Naive thymus-derived CD4-positive, alpha-beta T cell (primary cell): ENCODE measurements at regions of chr1 and their contacts with region 1.

Region 1: DNA sequence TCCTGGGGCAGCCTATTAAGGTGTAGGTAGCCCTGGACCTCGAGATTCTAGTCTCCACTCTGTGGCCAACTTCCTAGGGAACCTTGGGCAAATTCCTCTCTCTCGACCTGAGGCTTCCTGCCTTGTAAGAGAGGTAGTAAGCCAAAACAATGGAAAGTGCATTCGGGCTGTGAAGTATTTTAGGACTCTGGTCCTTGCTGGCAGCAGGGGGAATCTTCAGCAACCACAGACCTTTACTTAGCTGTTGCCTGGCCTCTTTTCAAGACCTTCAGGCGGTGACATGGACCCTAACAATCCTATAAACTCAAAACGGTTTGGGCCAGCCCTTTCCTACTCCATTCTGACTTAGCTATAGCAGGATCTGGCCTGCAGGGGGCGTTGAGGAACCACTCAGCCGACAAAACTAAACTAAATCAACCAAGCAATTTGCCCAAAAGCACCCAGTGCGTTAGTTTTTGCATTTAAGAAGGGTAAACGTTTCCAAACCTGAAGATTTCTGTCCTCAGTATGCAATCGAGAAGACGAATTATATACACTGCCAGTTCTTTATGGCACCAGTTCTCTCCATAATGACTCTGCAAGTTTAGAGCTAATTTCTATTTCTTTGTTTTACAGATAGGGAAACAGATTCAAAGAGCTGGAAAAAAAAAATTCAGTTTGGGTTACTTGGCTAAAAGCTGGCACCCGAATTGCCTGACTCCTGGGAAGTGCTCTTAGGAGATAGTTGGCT is 10.9 kb upstream of the SESN2 start:
- DNase-seq: peak; percentile 67 to 86 (median 80)
- ATAC-seq: peak; percentile 36
- H3K4me3 ChIP-seq: peak overlapping the region; percentile 75
- H3K4me3 Mint-ChIP-seq: peak overlapping the region; percentile 80 to 99 (median 90)
- H3K27ac ChIP-seq: peak overlapping the region; percentile 95
- H3K27ac Mint-ChIP-seq: peak overlapping the region; percentile 90 to 100 (median 94)
- H3K4me1 ChIP-seq: peaks cover 46 to 52% of the 10 kb centered on the region in 2 donors
- H3K4me1 Mint-ChIP-seq: peaks cover 38 to 52% (median 49%) of the 10 kb centered on the region in 7 donors
- H3K27me3 ChIP-seq: no peaks in the 10 kb centered on the region
- H3K27me3 Mint-ChIP-seq: no peaks in the 10 kb centered on the region

Region 2: DNA sequence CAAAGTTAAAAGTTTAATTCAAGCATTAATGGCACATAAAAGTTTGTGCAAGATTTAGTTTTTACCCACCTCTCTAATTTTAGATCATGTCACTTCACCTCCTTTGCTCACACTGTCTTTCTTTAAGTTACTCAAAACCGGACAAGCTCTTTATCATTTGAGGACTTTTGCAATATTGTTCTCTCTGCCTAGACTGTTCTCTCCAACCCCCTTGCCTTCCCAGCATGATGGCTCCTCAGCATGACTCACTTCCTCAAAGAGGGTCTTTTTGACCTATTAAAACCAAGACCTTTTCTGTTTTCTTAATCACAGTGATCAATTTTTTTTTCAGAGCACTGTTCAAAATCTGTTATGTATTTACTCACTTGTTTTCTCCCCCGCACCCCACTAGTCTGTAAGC is 227.4 kb before region 1 on chr1:
- CTCF ChIA-PET with region 1: no interaction called
- POLR2A ChIA-PET with region 1: no interaction called
- intact Hi-C with region 1: no loop called
- DNase-seq: no peak
- ATAC-seq: no peak
- H3K4me3 ChIP-seq: no peak overlapping the region
- H3K4me3 Mint-ChIP-seq: no peak overlapping the region
- H3K27ac ChIP-seq: no peak overlapping the region
- H3K27ac Mint-ChIP-seq: peak overlapping the region in 4 of 9 donors; percentile 2 to 76 (median 30)
- H3K4me1 ChIP-seq: no peaks in the 10 kb centered on the region
- H3K4me1 Mint-ChIP-seq: peaks cover 0 to 14% (median 2%) of the 10 kb centered on the region in 7 donors
- H3K27me3 ChIP-seq: no peaks in the 10 kb centered on the region
- H3K27me3 Mint-ChIP-seq: no peaks in the 10 kb centered on the region

Region 3: DNA sequence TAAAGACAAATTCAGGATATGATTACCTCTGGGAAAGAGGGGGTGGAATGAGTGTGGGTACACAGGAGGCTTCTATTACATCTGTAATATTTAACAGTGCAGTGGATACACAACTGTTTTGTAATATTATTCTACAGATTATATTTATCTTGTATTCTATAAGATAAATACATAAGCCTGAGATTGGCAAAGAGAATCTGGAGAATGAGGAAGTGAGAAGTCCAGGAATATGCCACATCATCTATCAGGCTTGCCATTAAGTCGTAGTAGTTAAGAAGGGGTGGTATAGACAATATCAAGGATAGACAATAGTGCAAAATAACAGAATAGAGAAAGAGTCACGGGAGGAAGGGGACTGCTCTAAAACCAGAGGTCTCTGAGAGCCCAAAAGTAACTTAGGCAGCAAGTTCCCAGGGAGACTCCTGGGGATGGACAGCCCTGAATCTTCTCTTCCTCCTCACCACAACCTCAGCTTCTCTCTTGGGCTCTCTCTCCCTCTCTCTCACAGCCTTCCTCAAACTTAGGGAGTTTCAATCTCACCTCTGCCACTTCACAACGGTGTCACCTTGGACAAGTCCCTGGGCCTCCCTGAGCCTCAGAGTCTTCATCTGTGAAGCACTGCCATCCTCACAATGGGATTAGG is 58.0 kb before region 1 on chr1:
- CTCF ChIA-PET with region 1: no interaction called
- POLR2A ChIA-PET with region 1: no interaction called
- intact Hi-C with region 1: no loop called
- DNase-seq: no peak
- ATAC-seq: peak; percentile 42
- H3K4me3 ChIP-seq: no peak overlapping the region
- H3K4me3 Mint-ChIP-seq: no peak overlapping the region
- H3K27ac ChIP-seq: no peak overlapping the region
- H3K27ac Mint-ChIP-seq: no peak overlapping the region
- H3K4me1 ChIP-seq: peaks cover 0 to 5% of the 10 kb centered on the region in 2 donors
- H3K4me1 Mint-ChIP-seq: peaks cover 0 to 7% (median 0%) of the 10 kb centered on the region in 7 donors
- H3K27me3 ChIP-seq: no peaks in the 10 kb centered on the region
- H3K27me3 Mint-ChIP-seq: peaks cover 0 to 40% (median 0%) of the 10 kb centered on the region in 5 donors

Region 4: DNA sequence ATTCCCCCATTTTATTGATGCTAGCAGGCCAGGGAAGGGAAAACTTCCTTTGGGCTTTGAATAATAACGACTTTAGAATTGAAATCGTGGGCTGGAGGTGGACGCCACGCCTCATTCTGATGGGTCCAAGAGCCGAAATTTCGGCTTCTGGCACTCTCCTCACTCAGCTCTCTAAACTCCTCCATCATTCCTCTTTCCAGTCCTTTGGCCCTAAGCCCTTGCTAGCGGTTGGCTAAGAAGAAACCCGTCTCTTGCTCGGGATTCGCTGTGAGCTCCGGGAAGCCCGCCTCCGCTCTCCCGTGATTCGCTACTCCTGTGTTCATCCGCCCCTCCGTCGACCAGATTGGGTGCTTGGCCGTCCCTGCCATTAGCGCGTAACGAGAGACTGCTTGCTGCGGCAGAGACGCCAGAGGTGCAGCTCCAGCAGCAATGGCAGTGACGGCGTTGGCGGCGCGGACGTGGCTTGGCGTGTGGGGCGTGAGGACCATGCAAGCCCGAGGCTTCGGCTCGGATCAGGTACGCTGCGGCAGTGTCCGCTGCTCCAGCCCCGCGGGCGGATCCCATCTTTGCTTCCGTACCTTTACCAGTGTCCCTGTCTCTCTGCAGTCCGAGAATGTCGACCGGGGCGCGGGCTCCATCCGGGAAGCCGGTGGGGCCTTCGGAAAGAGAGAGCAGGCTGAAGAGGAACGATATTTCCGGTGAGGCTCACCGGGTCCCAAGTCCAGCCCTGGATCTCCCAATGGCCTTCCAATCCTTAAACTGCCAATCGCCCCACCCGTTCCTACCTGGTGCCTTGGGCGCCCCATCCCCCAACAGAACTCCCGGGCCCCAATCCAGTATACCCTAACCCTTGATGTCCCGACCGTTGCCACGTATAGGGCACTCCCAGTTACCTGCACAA is 12.4 kb before region 1 on chr1 and contains the start of gene ATP5IF1:
- CTCF ChIA-PET with region 1: interaction called, 12 read pairs
- POLR2A ChIA-PET with region 1: interaction called, 184 read pairs
- intact Hi-C with region 1: loop called (anchors 1 kb)
- DNase-seq: peak; percentile 78 to 96 (median 94)
- ATAC-seq: peak; percentile 97
- H3K4me3 ChIP-seq: peak within 1 kb of the TSS; percentile 95
- H3K4me3 Mint-ChIP-seq: peak within 1 kb of the TSS in 2 of 10 donors; percentile 5 to 48
- H3K27ac ChIP-seq: peak within 1 kb of the TSS; percentile 87
- H3K27ac Mint-ChIP-seq: no peak within 1 kb of the TSS
- H3K4me1 ChIP-seq: peaks cover 26 to 34% of the 10 kb centered on the region in 2 donors
- H3K4me1 Mint-ChIP-seq: peaks cover 7 to 33% (median 20%) of the 10 kb centered on the region in 7 donors
- H3K27me3 ChIP-seq: no peaks in the 10 kb centered on the region
- H3K27me3 Mint-ChIP-seq: no peaks in the 10 kb centered on the region
- total RNA-seq, gene ATP5IF1: 68.2 to 158 (median 104) TPM

Region 5: GRCh38 chr1:28369371-28370238 is 121.2 kb after region 1 on chr1 and contains the start of gene PHACTR4:
- CTCF ChIA-PET with region 1: interaction called, 3 read pairs
- POLR2A ChIA-PET with region 1: interaction called, 5 read pairs
- intact Hi-C with region 1: loop called (anchors 1 kb)
- DNase-seq: peak; percentile 54 to 81 (median 66)
- ATAC-seq: peak; percentile 96
- H3K4me3 ChIP-seq: peak within 1 kb of the TSS; percentile 74
- H3K4me3 Mint-ChIP-seq: peak within 1 kb of the TSS; percentile 82 to 98 (median 94)
- H3K27ac ChIP-seq: peak within 1 kb of the TSS; percentile 79
- H3K27ac Mint-ChIP-seq: peak within 1 kb of the TSS; percentile 88 to 99 (median 91)
- H3K4me1 ChIP-seq: peaks cover 10 to 11% of the 10 kb centered on the region in 2 donors
- H3K4me1 Mint-ChIP-seq: peaks cover 11 to 40% (median 35%) of the 10 kb centered on the region in 7 donors
- H3K27me3 ChIP-seq: no peaks in the 10 kb centered on the region
- H3K27me3 Mint-ChIP-seq: peaks cover 0 to 2% (median 0%) of the 10 kb centered on the region in 5 donors
- total RNA-seq, gene PHACTR4: 19.8 to 29.0 (median 25.7) TPM

Region 6: GRCh38 chr1:28552758-28553663 is 304.6 kb after region 1 on chr1 and contains the start of gene TRNAU1AP:
- CTCF ChIA-PET with region 1: interaction called, 3 read pairs
- POLR2A ChIA-PET with region 1: interaction called, 7 read pairs
- intact Hi-C with region 1: loop called (anchors 2 kb)
- DNase-seq: peak; percentile 92 to 98 (median 97)
- ATAC-seq: peak; percentile 98
- H3K4me3 ChIP-seq: peak within 1 kb of the TSS; percentile 95
- H3K4me3 Mint-ChIP-seq: peak within 1 kb of the TSS; percentile 94 to 99 (median 98)
- H3K27ac ChIP-seq: peak within 1 kb of the TSS; percentile 81
- H3K27ac Mint-ChIP-seq: peak within 1 kb of the TSS; percentile 94 to 99 (median 98)
- H3K4me1 ChIP-seq: peaks cover 0 to 15% of the 10 kb centered on the region in 2 donors
- H3K4me1 Mint-ChIP-seq: peaks cover 10 to 26% (median 19%) of the 10 kb centered on the region in 7 donors
- H3K27me3 ChIP-seq: no peaks in the 10 kb centered on the region
- H3K27me3 Mint-ChIP-seq: no peaks in the 10 kb centered on the region
- total RNA-seq, gene TRNAU1AP: 27.6 to 52.5 (median 40.9) TPM

Region 7: DNA sequence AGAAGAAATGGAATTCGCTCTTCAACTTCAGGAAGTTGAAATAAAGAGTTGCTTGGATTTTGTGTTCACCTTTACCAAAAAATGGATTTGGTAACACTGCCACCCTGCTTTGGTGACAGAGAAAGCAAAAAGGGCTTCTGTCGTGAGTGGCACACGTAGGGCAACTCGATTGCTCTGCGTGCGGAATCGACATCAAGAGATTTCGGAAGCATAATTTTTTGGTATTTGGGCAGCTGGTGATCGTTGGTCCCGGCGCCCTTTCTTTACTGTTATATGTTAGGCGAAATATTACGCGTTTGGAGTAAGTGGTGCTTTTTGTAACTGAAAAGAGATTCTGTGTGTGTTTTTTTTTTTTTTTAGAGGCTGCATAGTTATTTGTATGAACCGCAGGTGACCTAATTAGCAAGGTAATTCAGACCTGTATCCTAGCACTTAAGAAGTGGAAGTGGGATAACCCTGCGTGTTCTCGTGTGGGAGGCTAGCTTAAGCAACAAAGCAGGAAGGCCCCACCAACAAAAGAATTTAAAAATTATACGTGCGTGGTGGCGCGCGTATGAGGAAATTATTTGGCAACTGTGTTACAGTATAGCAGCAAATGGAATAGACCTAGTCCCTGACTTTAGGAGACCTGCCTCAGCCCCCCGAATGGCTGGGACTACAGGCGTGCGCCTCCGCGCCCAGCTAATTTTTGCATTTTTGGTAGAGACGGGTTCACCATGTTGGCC is 400.2 kb after region 1 on chr1 and contains the start of gene RNU11:
- CTCF ChIA-PET with region 1: no interaction called
- POLR2A ChIA-PET with region 1: interaction called, 7 read pairs
- intact Hi-C with region 1: loop called (anchors 2 kb)
- DNase-seq: peak in 8 of 9 donors; percentile 67 to 97 (median 91)
- ATAC-seq: peak; percentile 86
- H3K4me3 ChIP-seq: peak within 1 kb of the TSS; percentile 60
- H3K4me3 Mint-ChIP-seq: peak within 1 kb of the TSS; percentile 70 to 96 (median 90)
- H3K27ac ChIP-seq: peak within 1 kb of the TSS; percentile 93
- H3K27ac Mint-ChIP-seq: peak within 1 kb of the TSS; percentile 97 to 100 (median 99)
- H3K4me1 ChIP-seq: peaks cover 25 to 27% of the 10 kb centered on the region in 2 donors
- H3K4me1 Mint-ChIP-seq: peaks cover 14 to 39% (median 31%) of the 10 kb centered on the region in 7 donors
- H3K27me3 ChIP-seq: no peaks in the 10 kb centered on the region
- H3K27me3 Mint-ChIP-seq: no peaks in the 10 kb centered on the region
- total RNA-seq, gene RNU11: not detected